ENCODE measurements at regions of chr17 and their contacts with region 1.

Region 1: DNA sequence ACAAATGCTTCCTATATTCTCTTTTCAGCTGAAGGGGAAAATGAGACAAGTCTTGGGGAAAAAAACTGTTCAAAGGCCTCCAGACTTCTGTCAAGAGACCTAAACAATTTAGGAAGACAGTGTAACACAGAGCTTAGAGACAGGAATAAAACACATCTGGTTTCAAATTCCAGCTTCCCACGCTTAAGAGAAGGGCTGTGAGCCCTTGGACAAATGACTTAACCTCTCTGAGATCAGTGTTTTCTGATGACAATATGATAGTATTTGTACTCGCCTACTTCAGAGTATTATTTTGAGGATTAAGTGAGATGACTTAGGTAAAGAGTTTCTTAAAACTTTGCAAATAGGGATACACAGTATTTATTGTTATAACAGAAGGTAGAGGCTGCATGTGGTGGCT is 29.5 kb downstream of the SMURF2 start:
- DNase-seq: no peak
- H3K4me3 ChIP-seq: no peak overlapping the region
- H3K27ac ChIP-seq: no peak overlapping the region
- H3K4me1 ChIP-seq: peaks cover 0 to 7% (median 3%) of the 10 kb centered on the region in 4 experiments
- H3K27me3 ChIP-seq: no peaks in the 10 kb centered on the region

Region 2: DNA sequence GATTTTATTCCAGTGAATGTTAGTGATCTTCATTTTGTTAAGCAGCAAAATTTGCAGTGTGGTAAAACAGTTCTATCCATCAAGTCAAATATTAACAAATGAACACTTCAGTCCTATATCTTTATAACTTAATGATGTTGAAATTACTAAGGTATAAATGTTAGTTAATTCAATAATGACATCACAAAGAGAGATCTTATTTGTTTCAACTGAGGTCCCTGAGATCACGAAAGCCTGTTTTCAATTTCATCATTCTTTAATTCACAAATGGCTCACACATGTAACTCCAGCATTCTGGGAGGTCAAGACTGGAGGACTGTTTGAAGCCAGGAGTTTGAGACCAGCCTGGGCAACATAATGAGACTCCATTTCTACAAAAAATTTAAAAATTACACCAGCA is 15.6 kb after region 1 on chr17:
- CTCF ChIA-PET with region 1: interaction called, 19 read pairs
- POLR2A ChIA-PET with region 1: no interaction called
- DNase-seq: no peak
- H3K4me3 ChIP-seq: no peak overlapping the region
- H3K27ac ChIP-seq: no peak overlapping the region
- H3K4me1 ChIP-seq: no peaks in the 10 kb centered on the region
- H3K27me3 ChIP-seq: no peaks in the 10 kb centered on the region

Region 3: GRCh38 chr17:64679688-64680216 is 47.1 kb after region 1 on chr17:
- CTCF ChIA-PET with region 1: no interaction called
- POLR2A ChIA-PET with region 1: no interaction called
- DNase-seq: no peak
- H3K4me3 ChIP-seq: no peak overlapping the region
- H3K27ac ChIP-seq: no peak overlapping the region
- H3K4me1 ChIP-seq: no peaks in the 10 kb centered on the region
- H3K27me3 ChIP-seq: no peaks in the 10 kb centered on the region